Transverse colon (tissue), 4 donors: ENCODE measurements at regions of chr14 and their contacts with region 1.

Region 1: GRCh38 chr14:31770271-31770670 is 209.1 kb downstream of the NUBPL start:
- DNase-seq: no peak
- H3K4me3 ChIP-seq: no peak overlapping the region
- H3K27ac ChIP-seq: no peak overlapping the region
- H3K4me1 ChIP-seq: peaks cover 0 to 4% (median 0%) of the 10 kb centered on the region in 4 donors
- H3K27me3 ChIP-seq: no peaks in the 10 kb centered on the region
- CTCF ChIP-seq: no peak
- EP300 ChIP-seq: no peak
- POLR2A ChIP-seq: no peak

Region 2: GRCh38 chr14:31291210-31291609 is 479.1 kb before region 1 on chr14:
- in situ Hi-C with region 1: no loop called
- intact Hi-C with region 1: loop called (anchors 5 kb)
- DNase-seq: no peak
- H3K4me3 ChIP-seq: no peak overlapping the region
- H3K27ac ChIP-seq: no peak overlapping the region
- H3K4me1 ChIP-seq: no peaks in the 10 kb centered on the region
- H3K27me3 ChIP-seq: no peaks in the 10 kb centered on the region
- CTCF ChIP-seq: no peak
- EP300 ChIP-seq: no peak
- POLR2A ChIP-seq: no peak